ENCODE measurements at regions of chr5 and their contacts with region 1.

Region 1: DNA sequence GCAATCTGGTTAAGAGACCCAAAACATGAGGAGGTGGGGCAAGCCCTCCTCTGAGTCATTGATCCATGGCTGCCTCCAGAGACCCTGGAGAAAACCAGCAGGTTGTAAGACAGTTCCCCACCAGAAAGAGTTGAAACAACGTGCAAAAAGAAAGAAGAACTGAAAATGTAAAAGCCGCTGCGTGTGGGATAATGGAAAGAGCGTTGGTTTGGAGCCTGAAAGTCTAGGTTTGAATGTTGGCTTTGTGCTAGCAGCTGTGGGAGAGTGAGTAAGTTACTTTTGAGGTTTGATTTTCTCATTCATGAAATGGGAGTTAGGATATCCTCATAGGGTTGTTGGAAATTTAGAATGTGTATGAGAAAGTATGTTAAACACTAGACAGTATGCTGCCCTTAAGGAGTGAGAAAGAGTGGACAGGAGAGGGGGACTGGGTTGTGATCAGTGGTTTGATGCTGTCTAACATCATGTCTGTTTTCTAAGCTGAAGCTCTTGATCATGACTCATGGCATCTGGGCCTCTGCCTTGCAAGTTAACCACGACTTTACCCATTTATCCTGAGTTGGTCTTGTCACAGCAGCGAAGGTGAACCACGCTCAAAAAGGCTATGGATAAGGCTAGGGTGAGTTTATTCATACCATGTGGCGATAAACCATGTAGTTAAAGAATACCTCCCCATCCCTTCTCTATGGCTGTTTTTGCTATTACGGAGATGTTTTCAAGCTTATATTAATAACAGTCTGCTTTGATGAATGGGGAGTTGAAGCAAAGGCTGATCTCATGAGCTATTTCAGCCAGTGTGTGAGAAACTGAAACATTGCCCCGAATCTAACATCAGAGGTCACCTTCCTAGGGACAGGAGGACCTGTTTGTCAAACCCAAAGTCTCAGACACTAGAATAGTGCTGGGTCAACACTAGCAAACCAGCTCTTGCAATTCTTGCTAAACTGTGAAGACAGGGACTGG is 41.3 kb downstream of the ZNF366 start:
- H3K4me3 Mint-ChIP-seq: peak overlapping the region; percentile 61
- H3K27ac Mint-ChIP-seq: peak overlapping the region; percentile 92
- H3K4me1 Mint-ChIP-seq: peaks cover 69% of the 10 kb centered on the region
- H3K27me3 Mint-ChIP-seq: no peaks in the 10 kb centered on the region

Region 2: DNA sequence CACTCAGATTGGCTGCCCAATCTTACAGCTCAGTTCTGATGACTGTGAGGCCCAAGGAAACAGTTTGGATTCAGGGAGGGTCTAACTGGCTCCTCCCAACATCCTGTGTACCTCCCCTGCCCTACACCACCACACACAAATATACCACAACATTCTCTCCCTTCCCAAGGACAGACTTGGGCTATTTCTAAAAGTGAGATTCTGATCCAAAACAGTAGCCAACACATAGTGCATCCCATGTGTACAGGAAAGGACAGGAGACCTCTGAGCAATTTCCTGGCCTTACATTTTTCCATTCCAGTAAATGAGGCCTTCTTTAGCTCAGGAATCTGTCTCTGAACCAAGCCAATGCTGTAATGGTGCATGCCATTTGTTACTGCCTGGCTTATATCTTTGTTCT is 20.5 kb after region 1 on chr5:
- intact Hi-C with region 1: no loop called
- H3K4me3 Mint-ChIP-seq: no peak overlapping the region
- H3K27ac Mint-ChIP-seq: peak overlapping the region; percentile 57
- H3K4me1 Mint-ChIP-seq: peaks cover 53% of the 10 kb centered on the region
- H3K27me3 Mint-ChIP-seq: no peaks in the 10 kb centered on the region

Region 3: DNA sequence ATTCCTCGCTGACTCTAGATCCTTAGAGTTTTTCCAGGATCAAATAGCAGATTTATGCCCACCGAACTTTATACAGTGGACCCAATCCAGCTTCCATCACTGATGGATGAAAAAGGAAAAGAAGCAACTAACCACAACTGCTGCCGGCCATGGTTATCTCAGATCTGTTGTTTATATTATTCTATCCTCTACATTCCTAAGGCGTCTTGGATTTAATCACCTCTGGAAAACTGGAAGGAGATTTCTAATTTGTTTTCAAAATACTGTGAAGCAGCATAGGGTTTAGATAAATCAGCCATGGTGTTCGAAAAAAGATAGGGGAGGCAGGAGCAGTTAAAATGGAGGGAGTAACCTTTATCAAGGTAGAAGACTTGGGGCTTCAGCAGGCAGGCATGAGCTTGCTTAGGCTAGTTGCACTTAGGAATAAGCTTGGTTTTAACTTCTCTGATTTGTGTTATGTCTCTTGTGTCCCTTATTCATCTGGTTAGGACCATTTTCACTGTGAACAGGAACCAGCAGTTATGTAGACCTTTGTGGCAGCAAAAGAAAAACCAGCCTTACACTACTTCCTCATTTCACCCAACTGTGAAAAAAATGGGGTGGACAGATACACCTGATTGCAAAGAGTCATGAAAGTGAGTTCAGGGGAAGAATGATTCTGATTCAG is 42.2 kb after region 1 on chr5:
- intact Hi-C with region 1: loop called (anchors 5 kb)
- H3K4me3 Mint-ChIP-seq: peak overlapping the region; percentile 74
- H3K27ac Mint-ChIP-seq: peak overlapping the region; percentile 82
- H3K4me1 Mint-ChIP-seq: peaks cover 88% of the 10 kb centered on the region
- H3K27me3 Mint-ChIP-seq: no peaks in the 10 kb centered on the region